Right ventricle myocardium inferior (tissue), 1 donor: ENCODE measurements at regions of chr6 and their contacts with region 1.

Region 1: DNA sequence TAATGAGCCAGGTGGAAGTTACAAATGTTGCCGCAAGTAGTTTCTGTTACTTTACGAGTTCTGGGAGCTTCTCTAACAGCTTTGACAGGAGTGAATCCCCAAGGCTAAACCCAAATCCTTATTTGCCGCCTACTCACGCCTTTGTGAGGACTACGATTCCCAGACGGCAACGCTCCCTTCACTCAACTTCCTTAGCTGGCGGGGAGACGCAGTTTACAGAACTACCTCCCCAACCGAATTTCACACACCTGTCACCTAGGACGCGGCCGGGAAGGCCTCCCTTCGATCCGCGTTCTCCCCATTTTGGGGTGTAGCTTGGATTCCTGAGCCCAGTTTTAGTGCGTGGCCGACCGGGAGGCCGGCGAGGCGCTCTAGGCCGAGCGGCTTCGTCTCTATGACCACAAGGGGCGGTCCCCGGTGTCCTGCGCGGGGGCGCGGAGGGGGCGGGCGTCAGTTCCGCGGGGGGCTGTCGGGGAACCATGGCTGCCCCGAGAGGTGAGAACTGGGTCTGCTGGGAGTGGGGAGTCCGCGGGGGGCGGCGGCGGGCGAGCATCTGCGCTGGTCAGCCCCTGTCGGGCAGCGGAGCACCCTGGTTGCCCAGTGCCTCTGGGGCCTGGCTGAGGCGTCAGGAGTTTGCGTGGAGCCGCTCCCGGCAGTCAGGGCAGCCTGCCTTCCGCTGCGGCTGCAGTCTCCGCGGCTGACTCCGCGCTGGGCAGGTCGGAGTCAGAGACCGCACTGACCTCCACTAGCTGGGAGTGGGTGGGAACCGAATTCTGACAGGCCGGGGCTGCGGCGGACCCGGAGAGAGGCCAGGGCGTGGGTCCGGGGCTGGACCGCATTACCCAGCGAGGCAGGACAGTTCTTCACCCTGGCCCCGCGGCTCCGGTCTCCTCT is at the start of gene SLC35A1:
- DNase-seq: peak; percentile 93
- ATAC-seq: peak; percentile 100
- total RNA-seq, gene SLC35A1: 10.9 TPM

Region 2: GRCh38 chr6:87154993-87155841 is 317.6 kb before region 1 on chr6 and contains the start of gene ZNF292:
- intact Hi-C with region 1: loop called (anchors 2 kb)
- DNase-seq: peak; percentile 99
- ATAC-seq: peak; percentile 92
- total RNA-seq, gene ZNF292: 35.0 TPM

Region 3: DNA sequence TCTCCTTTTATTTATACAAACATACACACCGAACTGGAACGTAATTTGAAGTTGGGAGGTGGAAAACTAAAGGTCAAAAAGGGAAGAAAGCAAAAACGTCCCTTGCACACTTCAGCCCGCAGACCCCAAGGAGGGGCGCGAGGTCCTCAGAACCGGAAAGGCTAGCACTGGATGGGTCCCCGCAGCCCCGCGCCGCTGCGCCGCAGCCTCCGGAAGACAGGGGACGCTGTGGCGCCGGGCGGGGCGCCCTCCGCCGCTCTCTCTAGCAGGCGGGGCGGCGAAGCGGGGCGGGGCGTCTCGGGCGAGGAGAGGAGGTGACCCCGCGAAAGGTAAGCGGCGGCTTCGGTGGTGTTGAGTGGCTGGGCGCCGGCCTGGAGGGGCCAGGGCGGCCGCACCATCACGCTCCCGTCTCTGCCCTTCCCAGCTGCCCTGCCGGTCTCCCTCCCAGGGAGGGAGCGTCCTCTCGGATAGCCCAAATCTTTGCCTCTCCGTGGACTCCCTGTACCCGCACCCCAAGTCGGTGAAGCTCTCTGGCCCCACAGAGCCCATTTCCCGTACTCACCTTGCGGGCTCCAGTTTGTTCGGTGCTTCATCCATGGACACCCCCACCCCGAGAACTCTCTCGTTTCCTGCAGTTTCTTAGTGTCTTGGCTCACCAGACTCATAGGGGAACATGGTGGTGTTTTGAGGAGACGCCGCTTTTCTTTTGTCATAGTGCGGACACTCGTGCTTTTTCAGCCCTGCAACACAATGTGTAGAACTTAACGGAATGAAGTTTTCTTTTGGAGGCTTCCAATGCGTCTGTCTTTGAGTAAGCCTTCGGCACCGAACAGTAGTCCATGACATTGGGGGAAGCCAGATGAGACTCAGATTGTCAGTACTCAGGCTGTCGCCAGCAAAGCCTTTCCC is 150.2 kb before region 1 on chr6 and contains the start of gene SMIM8:
- intact Hi-C with region 1: loop called (anchors 5 kb)
- DNase-seq: peak; percentile 95
- ATAC-seq: peak; percentile 100
- total RNA-seq, gene SMIM8: 10.9 TPM

Region 4: DNA sequence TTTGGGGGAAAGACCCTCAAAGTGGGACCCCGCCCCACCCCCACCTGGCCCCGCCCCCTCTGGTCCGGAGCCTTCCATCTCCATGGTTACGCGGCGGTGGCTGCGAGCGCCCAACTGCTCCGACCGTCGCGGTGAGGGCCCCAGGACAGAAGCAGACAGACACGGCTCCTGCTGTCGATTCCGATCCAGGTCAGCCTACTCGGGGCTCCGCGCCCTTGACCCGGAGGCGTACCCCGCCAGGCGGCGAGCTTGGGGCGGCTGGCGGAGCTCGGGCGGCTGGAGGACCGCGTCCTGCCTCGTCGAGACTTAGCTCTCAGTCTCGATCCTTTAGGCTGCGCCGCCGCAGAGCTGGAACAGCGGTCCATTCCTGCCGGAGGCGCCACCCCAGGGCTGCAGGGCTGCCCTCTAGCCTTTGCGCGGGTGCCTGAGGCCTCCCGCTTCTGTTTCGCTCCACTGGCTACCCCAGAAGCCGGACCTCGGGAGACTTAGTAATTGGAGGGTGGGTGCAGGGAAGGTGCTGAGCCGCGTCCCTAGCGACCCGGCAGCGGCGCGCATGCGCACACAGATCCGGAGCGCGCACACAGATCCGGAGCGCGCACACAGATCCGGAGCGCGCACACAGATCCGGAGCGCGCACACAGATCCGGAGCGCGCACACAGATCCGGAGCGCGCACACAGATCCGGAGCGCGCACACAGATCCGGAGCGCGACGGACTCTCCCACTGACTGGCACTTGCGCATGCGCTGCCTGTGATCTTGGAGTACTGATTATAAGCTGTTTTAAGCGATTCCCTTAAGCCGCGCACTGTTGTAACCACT is 64.7 kb before region 1 on chr6 and contains the start of gene CFAP206:
- intact Hi-C with region 1: loop called (anchors 2 kb)
- DNase-seq: peak; percentile 94
- ATAC-seq: peak; percentile 94
- total RNA-seq, gene CFAP206: 0.11 TPM

Region 5: GRCh38 chr6:87600576-87600975 is 127.8 kb after region 1 on chr6:
- intact Hi-C with region 1: no loop called
- DNase-seq: no peak
- ATAC-seq: no peak

Region 6: DNA sequence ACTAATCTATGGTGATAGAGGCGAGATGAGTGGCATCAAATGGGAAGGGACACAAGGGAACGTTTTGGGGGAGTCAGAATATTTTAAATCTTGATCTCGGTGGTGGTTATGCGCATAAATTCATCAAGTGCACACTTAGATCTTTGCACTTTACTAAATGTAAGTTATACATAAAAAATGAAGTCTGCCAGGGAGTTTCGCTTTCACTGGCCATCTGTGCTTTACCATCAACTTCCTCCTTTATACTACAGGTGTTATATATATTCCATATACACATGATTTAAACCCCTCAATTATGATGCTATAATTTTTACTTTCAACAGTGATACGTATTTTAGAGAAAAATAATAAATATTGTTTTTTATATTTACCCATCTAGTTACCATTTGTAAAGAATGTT is 326.9 kb after region 1 on chr6:
- intact Hi-C with region 1: loop called (anchors 10 kb)
- DNase-seq: no peak
- ATAC-seq: no peak